Endothelial cell of umbilical vein (primary cell): ENCODE measurements at regions of chr17 and their contacts with region 1.

Region 1: GRCh38 chr17:69047368-69048263 is 13.1 kb downstream of the ABCA9 start:
- DNase-seq: peak; percentile 99
- H3K4me3 ChIP-seq: no peak overlapping the region
- H3K27ac ChIP-seq: peak overlapping the region; percentile 95
- H3K4me1 ChIP-seq: peaks cover 35% of the 10 kb centered on the region
- H3K27me3 ChIP-seq: no peaks in the 10 kb centered on the region
- CTCF ChIP-seq: no peak
- POLR2A ChIP-seq: peak; percentile 77

Region 2: DNA sequence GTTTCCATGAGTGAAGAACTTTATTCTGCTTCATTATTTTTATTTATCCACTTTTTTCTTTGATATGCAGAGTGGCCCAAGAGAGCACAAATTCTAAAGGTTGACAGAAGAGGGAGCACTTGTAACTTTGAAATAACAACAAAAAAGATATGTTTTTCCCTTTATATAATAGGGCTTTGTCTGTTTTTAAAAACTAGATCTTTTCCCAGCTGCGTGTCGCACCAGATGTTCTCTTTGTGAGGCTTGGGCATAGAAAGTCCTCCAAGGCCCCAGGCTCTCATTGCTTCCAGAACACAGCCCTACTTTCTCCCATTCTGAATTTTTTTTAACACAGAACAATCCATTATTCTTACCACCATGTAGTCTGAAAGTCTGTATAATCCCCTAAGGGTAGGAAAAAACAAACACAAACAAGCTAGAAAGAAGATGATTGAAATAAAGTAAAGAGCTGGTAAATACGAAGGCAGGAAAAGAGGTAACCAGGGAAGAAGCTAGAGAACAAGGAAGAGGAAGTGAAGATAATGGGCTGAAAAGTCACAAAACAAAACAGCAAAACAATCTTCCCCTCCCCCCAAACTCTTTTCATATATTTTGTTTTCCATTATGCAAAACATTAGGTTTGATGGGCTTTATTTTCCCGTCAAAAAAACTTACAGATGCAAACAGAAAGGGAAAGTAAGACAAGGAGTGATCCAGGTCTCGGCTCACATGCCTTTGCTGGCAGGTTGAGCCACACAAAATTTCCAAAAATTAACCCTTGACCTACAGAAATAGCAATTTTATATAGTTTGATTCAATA is 252.8 kb before region 1 on chr17:
- CTCF ChIA-PET with region 1: interaction called, 3 read pairs
- POLR2A ChIA-PET with region 1: no interaction called
- dilution Hi-C with region 1: no loop called
- intact Hi-C with region 1: loop called (anchors 1 kb)
- DNase-seq: peak; percentile 82
- H3K4me3 ChIP-seq: no peak overlapping the region
- H3K27ac ChIP-seq: peak overlapping the region; percentile 89
- H3K4me1 ChIP-seq: peaks cover 26% of the 10 kb centered on the region
- H3K27me3 ChIP-seq: no peaks in the 10 kb centered on the region
- CTCF ChIP-seq: peak; percentile 18 to 31
- POLR2A ChIP-seq: no peak

Region 3: DNA sequence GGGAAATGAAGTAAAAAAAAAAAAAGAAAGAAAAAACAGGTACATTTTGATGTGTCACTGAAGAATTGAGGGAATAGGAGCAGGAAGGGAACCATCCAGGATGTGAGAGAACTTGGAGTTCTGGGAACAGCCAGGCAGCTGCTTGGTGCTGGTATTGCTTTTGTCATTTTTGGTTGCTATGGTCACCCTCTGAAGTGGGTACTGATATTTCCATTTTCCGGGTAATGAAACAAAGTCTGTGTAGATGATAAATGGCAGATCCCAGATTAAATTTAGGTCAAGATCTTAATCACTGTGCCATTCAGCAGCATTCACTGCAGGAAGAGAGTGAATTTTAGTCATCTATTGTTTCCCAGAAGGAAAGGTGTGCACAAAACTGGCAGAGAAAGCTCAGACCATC is 186.0 kb before region 1 on chr17:
- CTCF ChIA-PET with region 1: no interaction called
- POLR2A ChIA-PET with region 1: no interaction called
- dilution Hi-C with region 1: no loop called
- intact Hi-C with region 1: loop called (anchors 1 kb)
- DNase-seq: peak; percentile 67
- H3K4me3 ChIP-seq: no peak overlapping the region
- H3K27ac ChIP-seq: peak overlapping the region; percentile 45
- H3K4me1 ChIP-seq: peaks cover 10% of the 10 kb centered on the region
- H3K27me3 ChIP-seq: no peaks in the 10 kb centered on the region
- CTCF ChIP-seq: no peak
- POLR2A ChIP-seq: no peak

Region 4: DNA sequence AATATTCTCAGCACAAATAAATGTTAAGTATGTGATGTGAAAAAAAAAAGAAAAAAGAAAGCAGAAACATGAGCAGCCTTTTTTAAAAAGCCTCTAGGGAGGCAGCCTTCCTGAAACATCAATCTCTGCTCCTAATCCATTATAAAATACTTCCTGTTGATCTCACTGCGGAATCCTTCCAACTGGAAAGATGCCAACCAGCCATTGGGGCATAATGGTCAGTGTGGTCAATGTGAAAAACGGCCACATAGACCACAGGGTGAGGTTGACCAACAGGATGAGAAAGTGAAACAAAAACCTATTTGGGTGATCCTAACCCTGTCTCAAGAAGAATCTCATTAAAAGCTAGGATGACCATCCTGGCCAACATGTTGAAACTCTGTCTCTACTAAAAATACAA is 66.3 kb before region 1 on chr17:
- CTCF ChIA-PET with region 1: no interaction called
- POLR2A ChIA-PET with region 1: no interaction called
- dilution Hi-C with region 1: no loop called
- intact Hi-C with region 1: loop called (anchors 1 kb)
- DNase-seq: peak; percentile 98
- H3K4me3 ChIP-seq: no peak overlapping the region
- H3K27ac ChIP-seq: no peak overlapping the region
- H3K4me1 ChIP-seq: peaks cover 10% of the 10 kb centered on the region
- H3K27me3 ChIP-seq: no peaks in the 10 kb centered on the region
- CTCF ChIP-seq: no peak
- POLR2A ChIP-seq: no peak

Region 5: GRCh38 chr17:69078864-69079263 is 31.2 kb after region 1 on chr17:
- CTCF ChIA-PET with region 1: no interaction called
- POLR2A ChIA-PET with region 1: no interaction called
- dilution Hi-C with region 1: no loop called
- intact Hi-C with region 1: no loop called
- DNase-seq: no peak
- H3K4me3 ChIP-seq: no peak overlapping the region
- H3K27ac ChIP-seq: no peak overlapping the region
- H3K4me1 ChIP-seq: no peaks in the 10 kb centered on the region
- H3K27me3 ChIP-seq: no peaks in the 10 kb centered on the region
- CTCF ChIP-seq: no peak
- POLR2A ChIP-seq: no peak

Region 6: GRCh38 chr17:69093279-69093789 is 45.7 kb after region 1 on chr17:
- CTCF ChIA-PET with region 1: no interaction called
- POLR2A ChIA-PET with region 1: no interaction called
- dilution Hi-C with region 1: no loop called
- intact Hi-C with region 1: loop called (anchors 1 kb)
- DNase-seq: peak; percentile 89
- H3K4me3 ChIP-seq: peak overlapping the region in 1 of 3 experiments; percentile 37
- H3K27ac ChIP-seq: peak overlapping the region; percentile 3
- H3K4me1 ChIP-seq: peaks cover 11% of the 10 kb centered on the region
- H3K27me3 ChIP-seq: no peaks in the 10 kb centered on the region
- CTCF ChIP-seq: no peak
- POLR2A ChIP-seq: no peak

Region 7: DNA sequence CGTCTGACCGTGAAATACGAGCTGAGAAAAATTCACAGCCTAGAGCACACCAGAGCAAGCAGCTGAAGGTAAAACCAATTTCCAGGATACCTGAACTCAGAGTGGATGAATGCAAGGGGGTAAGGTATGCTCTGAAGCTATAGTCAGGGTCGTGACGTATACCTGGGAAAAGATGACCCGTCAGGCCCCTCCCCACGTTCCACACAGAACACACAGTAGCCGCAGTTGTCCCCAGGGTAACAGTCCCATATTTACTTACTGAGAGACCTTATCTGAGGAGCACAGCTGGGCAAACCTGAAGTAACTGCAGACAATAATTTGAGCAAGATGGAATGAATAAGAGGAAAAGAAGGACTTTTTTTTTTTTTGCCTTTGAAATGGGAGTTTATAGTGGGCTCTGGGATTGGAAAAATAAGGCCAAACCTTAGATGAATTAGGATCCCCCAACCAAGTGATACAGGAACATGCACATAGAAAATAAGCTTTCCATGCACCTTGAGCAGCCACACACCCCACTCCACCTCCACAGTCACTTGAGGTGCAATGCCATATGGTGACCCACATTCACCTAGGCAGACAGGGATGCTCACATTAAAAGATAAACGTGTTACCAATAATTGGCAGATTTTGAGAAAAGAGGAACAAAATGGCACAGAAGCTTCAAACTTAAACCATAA is 56.1 kb after region 1 on chr17:
- CTCF ChIA-PET with region 1: no interaction called
- POLR2A ChIA-PET with region 1: no interaction called
- dilution Hi-C with region 1: no loop called
- intact Hi-C with region 1: no loop called
- DNase-seq: no peak
- H3K4me3 ChIP-seq: no peak overlapping the region
- H3K27ac ChIP-seq: no peak overlapping the region
- H3K4me1 ChIP-seq: no peaks in the 10 kb centered on the region
- H3K27me3 ChIP-seq: no peaks in the 10 kb centered on the region
- CTCF ChIP-seq: no peak
- POLR2A ChIP-seq: no peak

Region 8: DNA sequence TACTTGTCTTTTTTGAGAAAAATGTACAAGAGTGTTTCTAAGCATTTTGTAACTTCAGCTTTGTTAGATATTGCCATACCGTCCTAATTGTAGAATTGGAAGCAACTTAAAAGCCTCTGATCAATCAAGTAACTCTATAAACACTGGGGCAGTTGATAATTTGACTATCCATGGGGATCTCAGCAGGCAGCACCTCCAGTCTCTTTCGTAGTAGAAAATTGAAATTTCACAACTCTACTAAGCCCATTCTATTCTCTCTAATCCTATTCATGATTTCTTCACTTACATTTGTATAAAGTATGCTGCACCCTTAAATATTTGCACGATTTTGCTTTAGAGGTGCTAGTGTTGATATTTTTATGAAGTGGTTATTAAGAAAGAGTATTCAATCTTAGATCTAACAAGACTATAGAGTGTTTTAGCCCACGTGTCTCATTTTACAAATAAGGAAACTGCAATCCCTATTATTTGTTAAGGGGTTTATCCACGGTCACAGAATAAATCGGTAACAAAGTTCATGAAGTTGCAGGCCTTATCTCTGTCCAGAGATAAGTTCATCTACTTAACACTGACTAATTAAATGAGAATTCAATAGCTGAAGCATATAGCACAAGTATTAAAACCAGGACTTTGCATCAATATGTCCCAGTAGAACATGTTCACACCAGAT is 83.1 kb after region 1 on chr17:
- CTCF ChIA-PET with region 1: no interaction called
- POLR2A ChIA-PET with region 1: no interaction called
- dilution Hi-C with region 1: no loop called
- intact Hi-C with region 1: no loop called
- DNase-seq: no peak
- H3K4me3 ChIP-seq: no peak overlapping the region
- H3K27ac ChIP-seq: no peak overlapping the region
- H3K4me1 ChIP-seq: no peaks in the 10 kb centered on the region
- H3K27me3 ChIP-seq: no peaks in the 10 kb centered on the region
- CTCF ChIP-seq: no peak
- POLR2A ChIP-seq: no peak

Region 9: DNA sequence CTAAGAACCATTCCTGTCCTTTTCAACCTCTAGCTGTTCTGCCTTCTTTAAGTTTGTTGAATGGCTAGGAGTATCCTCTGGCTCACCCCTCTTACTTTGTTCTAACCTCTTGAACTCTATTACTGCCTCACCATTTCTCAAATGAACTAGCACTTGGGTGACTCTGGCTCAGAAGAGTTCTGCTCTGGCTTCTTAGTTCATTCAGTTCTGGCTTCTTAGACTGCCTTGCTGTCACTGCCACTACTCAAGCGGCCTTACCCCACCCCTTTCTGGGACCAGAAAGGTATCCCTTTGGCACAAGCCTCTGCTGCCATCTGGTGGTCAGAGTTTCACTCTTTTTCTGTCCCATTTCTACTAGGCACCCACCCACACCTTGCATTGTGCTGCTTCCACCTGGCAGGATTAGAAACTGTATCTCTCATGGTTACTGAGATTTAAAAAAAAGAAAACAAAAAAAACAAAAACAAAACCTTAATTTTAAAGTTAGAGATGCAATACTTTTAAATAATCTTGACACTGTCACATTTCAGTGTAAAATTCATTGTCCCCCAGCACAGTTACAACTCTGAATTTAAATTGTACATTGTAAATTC is 187.8 kb after region 1 on chr17:
- CTCF ChIA-PET with region 1: no interaction called
- POLR2A ChIA-PET with region 1: no interaction called
- dilution Hi-C with region 1: no loop called
- intact Hi-C with region 1: loop called (anchors 1 kb)
- DNase-seq: peak; percentile 90
- H3K4me3 ChIP-seq: no peak overlapping the region
- H3K27ac ChIP-seq: peak overlapping the region; percentile 24
- H3K4me1 ChIP-seq: peaks cover 4% of the 10 kb centered on the region
- H3K27me3 ChIP-seq: no peaks in the 10 kb centered on the region
- CTCF ChIP-seq: peak; percentile 67 to 68
- POLR2A ChIP-seq: no peak